Posterior cingulate gyrus (tissue), 11 donors: ENCODE measurements at regions of chr1 and their contacts with region 1.

Region 1: GRCh38 chr1:224513787-224514209 is 79.2 kb upstream of the WDR26 start:
- DNase-seq: peak; percentile 66 to 97 (median 90)

Region 2: DNA sequence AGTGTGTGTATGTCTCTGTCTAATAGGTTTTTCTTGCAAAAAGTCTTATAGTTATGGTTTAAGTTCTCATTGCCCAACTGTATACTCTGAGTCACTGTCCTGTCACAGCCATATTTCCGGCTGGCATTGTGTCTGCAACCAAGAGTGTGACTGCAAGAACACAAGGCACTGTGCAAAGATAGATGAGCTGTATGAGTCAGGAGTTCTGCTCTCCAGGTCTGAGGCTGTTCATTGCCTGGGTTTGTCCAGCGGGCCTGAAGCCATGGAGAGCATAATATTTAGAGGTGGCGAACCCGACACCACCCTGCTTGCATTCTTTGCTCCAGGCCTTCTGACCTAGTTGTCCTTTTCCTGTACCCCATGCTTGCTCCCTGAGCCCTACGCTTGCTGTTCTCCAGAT is 51.4 kb after region 1 on chr1:
- intact Hi-C with region 1: no loop called
- DNase-seq: peak in 6 of 10 donors; percentile 16 to 89 (median 44)

Region 3: GRCh38 chr1:224644553-224645154 is 130.9 kb after region 1 on chr1:
- intact Hi-C with region 1: loop called (anchors 10 kb)
- DNase-seq: peak in 5 of 10 donors; percentile 39 to 80 (median 48)

Region 4: DNA sequence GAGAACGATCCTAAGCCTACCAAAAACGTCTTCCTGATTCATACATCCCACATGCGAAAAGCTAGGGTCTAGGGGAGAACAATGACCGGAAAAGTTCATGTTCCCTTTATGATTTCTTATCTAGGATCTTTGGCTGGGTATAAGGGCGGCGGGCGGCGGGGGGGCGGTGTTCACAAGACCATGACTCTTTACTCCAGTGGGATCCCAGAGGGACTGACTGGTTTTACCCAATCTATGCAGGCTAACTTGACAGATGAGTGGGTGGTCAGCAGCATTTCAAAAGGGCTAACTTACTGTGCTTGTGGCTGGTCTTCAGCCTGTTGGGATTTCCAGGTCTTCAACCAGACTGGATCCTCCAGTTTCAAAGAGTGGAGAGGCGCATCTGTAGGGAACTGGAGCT is 142.6 kb after region 1 on chr1:
- intact Hi-C with region 1: no loop called
- DNase-seq: no peak

Region 5: DNA sequence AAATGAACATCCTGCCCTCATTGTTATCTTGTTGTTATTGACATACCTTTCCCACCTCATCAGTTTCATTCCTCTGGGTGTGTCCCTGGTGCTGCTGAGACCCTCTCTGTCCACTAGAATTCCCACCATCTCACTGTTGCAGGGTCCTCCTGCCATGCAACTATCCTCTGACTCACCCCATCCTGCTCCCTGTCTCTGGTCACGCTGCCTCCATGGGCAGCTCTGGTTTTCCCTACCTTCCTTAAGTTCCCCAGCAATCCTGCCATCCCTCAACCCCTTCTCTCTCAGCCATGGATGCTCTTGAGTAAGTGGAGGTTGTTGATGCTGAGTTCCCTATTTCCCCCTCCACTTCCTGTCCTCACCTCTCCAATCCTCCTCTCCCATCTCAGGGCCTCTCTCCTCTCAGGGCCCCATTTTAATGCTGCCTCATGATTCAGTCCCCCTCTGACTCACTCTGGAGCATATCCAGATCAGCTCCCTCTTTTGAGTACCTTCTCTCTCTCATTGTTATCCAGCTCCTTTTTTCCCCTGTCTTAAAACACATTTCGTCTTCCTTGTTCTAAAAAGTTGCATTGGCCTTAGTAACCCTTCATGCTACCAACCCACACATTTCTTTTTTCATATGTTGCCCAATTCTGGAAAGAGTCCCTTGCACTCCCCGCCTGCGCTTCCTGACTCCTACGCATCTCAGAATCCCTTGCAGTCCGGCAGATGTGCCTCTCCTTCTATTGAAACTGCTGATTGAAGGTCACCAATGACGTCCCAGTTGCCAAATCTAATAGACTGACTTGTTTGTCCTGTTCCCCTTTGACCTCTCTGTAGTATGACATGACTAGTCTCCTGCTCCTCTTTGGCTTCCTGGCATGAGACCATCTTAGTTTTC is 194.3 kb after region 1 on chr1:
- intact Hi-C with region 1: no loop called
- DNase-seq: no peak

Region 6: GRCh38 chr1:224851210-224851847 is 337.5 kb after region 1 on chr1:
- intact Hi-C with region 1: loop called (anchors 2 kb)
- DNase-seq: peak in 7 of 10 donors; percentile 50 to 89 (median 66)

Region 7: GRCh38 chr1:224922404-224923164 is 408.8 kb after region 1 on chr1:
- intact Hi-C with region 1: loop called (anchors 1 kb)
- DNase-seq: peak in 1 of 10 donors; percentile 63